ENCODE measurements at regions of chr22 and their contacts with region 1.

Region 1: DNA sequence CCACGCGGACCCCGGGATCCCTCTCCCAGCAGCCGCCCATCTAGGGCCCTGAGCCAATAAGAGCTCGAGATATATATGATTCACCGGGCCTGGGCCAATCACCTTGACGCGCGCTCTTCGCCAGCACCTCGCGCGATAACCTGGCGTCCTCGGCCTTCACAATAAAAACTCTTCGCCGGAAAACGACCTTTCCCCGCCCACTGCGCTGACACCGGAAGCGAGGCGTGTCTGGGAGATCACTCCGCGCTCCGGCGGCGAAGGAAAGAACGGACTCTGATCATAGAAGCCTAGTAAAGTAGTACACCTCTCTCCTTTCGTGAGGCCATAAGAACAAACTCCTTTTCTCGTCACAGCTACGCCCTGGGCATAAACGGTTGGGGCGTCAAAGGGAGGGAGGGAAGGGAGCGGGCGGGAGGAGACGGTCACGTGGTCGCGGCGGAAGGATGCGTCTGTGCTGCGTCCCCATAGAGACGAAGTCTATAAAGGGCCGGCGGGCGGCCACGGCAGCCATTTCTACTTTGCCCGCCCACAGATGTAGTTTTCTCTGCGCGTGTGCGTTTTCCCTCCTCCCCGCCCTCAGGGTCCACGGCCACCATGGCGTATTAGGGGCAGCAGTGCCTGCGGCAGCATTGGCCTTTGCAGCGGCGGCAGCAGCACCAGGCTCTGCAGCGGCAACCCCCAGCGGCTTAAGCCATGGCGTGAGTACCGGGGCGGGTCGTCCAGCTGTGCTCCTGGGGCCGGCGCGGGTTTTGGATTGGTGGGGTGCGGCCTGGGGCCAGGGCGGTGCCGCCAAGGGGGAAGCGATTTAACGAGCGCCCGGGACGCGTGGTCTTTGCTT is at the start of gene ATF4:
- H3K4me3 ChIP-seq: peak within 1 kb of the TSS; percentile 95
- H3K27ac ChIP-seq: peak within 1 kb of the TSS; percentile 95
- H3K4me1 ChIP-seq: 0 out of 2 replicates have a peak, but pooled peaks cover 5% of the 10 kb centered on the region
- CTCF ChIP-seq: 0 out of 2 replicates have a peak, but pooled peaks have one; percentile 11

Region 2: DNA sequence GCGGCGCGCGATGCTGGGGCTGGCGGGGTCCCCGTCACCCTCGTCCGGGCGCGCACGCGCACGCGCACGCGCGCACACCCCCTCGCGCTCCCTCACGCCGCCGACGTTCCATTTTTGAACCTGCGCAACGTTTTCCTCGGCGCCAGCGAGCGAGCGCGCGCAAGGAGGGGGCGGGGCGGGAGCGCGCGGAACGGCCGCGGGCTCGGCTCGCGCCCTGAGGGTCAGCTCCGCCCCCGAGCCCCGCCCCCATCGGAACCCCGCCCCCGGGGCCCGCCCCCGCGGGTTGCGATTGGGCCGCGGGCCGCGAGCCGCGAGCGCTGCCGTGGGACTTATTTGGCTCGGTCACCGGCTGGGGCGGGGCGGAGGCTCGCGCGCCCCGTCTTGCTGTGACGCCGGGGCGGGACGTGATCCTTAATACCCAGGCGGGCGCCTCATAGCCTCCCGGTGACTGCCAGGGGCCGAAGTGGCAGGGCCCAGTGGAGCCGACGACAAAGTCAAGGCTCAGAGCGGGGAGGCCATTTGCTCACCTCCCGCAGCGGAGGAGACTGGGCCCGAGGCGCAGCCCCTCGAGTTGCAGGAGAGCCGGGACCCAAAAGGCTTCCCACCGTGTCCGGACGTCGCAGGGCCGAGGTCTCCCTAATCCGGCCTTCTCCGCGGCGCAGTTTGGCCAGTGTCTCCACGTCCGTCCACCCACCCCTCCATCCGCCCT is 367.6 kb before region 1 on chr22 and contains the start of gene CBX7:
- CTCF ChIA-PET with region 1: no interaction called
- POLR2A ChIA-PET with region 1: interaction called, 12 read pairs
- H3K4me3 ChIP-seq: peak within 1 kb of the TSS; percentile 54
- H3K27ac ChIP-seq: peak within 1 kb of the TSS; percentile 64; the same call in 1 of the 2 replicates
- H3K4me1 ChIP-seq: peaks cover 2% of the 10 kb centered on the region; the same call in 1 of the 2 replicates
- CTCF ChIP-seq: no peak

Region 3: DNA sequence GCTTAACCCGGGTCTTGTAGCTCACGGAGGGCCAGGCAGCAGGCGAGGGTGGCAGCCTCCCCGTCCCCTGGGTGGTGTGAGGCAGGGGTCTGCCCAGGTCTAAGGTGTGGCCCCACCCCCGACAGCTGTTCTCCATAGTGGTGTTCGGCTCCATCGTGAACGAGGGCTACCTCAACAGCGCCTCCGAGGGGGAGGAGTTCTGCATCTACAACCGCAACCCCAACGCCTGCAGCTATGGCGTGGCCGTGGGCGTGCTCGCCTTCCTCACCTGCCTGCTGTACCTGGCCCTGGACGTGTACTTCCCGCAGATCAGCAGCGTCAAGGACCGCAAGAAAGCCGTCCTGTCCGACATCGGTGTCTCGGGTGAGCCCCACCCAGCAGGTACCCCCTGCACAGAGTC is 146.1 kb before region 1 on chr22:
- CTCF ChIA-PET with region 1: no interaction called
- POLR2A ChIA-PET with region 1: no interaction called
- H3K4me3 ChIP-seq: no peak overlapping the region
- H3K27ac ChIP-seq: no peak overlapping the region
- H3K4me1 ChIP-seq: no peaks in the 10 kb centered on the region
- CTCF ChIP-seq: no peak

Region 4: GRCh38 chr22:39422721-39423120 is 97.6 kb before region 1 on chr22:
- CTCF ChIA-PET with region 1: no interaction called
- POLR2A ChIA-PET with region 1: no interaction called
- H3K4me3 ChIP-seq: no peak overlapping the region
- H3K27ac ChIP-seq: no peak overlapping the region
- H3K4me1 ChIP-seq: no peaks in the 10 kb centered on the region
- CTCF ChIP-seq: no peak

Region 5: DNA sequence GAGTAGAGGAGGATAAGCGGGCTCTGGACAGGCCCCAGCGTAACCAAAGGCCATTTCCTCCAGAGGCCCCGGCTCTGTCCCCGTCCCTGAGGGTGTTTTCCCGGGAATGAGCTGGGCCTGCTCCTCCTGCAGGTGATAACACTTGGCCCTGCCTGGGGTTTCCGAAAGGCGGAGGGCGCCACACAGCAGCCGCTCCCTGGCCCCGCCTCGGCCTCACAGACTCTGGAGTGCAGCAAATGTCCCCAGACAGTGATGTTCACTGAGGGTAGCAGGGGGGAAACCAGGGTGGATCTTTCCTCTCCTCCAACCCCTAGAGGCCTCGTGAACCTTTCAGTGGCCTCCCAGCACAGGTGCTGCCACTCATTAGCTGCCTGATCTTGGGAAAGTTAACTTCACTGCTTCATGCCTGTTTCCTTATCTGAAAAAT is 74.0 kb before region 1 on chr22:
- CTCF ChIA-PET with region 1: no interaction called
- POLR2A ChIA-PET with region 1: interaction called, 16 read pairs
- H3K4me3 ChIP-seq: no peak overlapping the region
- H3K27ac ChIP-seq: no peak overlapping the region
- H3K4me1 ChIP-seq: no peaks in the 10 kb centered on the region
- CTCF ChIP-seq: 0 out of 2 replicates have a peak, but pooled peaks have one; percentile 23

Region 6: DNA sequence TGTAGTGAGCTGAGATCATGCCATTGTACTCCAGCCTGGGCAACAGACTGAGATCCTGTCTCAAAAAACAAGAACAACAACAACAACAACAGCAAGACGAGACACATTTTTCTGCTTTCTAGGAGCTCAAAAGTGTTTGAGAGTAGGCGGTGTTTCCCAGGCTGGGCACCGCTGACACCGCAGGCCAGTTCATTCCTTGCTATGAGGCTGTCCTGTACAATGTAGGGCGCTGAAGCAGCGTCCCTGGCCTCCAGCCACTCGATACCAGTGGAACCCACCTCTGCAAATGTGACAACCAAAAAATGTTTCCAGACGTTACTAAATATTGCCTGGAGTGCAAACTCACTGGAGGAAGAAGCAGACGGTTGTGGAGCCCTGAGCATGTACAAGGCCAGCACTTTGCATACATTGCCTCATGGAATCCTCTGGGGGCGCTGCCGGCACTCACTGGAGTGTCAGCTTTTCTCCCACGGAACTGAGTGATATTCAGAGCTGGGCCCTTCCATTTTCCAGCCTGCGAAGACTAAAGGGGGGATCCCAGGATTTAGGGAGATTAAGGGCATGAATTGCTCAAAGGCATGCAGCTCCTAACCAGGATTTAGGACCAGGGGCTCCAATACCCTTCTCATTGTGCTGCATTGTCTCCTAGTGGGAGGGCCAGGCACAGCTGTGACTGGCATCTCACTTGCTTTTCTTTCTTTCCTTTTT is 24.0 kb before region 1 on chr22:
- CTCF ChIA-PET with region 1: interaction called, 380 read pairs
- POLR2A ChIA-PET with region 1: interaction called, 117 read pairs
- H3K4me3 ChIP-seq: no peak overlapping the region
- H3K27ac ChIP-seq: no peak overlapping the region
- H3K4me1 ChIP-seq: peaks cover 4% of the 10 kb centered on the region
- CTCF ChIP-seq: peak; percentile 69

Region 7: GRCh38 chr22:39508393-39508792 is 11.9 kb before region 1 on chr22:
- CTCF ChIA-PET with region 1: interaction called, 13 read pairs
- POLR2A ChIA-PET with region 1: interaction called, 117 read pairs
- H3K4me3 ChIP-seq: no peak overlapping the region
- H3K27ac ChIP-seq: peak overlapping the region; percentile 11; the same call in 1 of the 2 replicates
- H3K4me1 ChIP-seq: peaks cover 2% of the 10 kb centered on the region; the same call in 1 of the 2 replicates
- CTCF ChIP-seq: no peak

Region 8: GRCh38 chr22:40044102-40044869 is 524.0 kb after region 1 on chr22:
- CTCF ChIA-PET with region 1: no interaction called
- POLR2A ChIA-PET with region 1: interaction called, 14 read pairs
- H3K4me3 ChIP-seq: peak overlapping the region; percentile 99
- H3K27ac ChIP-seq: peak overlapping the region; percentile 72
- H3K4me1 ChIP-seq: peaks cover 20% of the 10 kb centered on the region
- CTCF ChIP-seq: no peak